ENCODE measurements at regions of chr14 and their contacts with region 1.

Region 1: DNA sequence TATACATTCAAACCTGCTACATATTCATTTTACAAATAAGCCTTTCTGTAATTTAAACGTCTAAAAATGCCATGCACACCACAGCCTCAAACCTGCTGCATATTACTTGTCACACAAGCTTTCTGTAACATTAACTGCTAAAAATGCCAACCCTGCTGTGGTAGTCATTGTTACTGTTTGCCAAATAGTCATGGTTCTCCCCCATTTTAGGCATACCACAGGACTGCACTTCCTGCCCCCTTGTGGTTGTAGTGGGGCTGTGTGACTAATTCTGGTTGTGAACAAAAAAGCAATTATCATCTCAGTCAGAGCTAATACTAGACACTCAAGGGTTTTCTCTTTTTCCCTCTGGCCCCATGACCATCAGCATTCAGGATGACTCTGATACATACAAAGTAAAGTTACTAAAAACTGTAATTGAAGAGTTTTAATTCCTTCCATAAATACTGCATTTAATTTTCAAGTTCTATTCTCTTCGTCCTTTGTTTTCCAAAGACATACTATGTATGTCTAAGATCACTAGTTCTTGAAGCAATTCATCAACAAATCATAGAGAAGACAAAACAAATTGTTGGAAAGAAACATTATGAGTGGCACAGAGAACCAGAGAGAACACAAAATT is 5.7 kb upstream of the SLC35F4 start:
- DNase-seq: peak; percentile 34 to 58
- H3K4me3 ChIP-seq: no peak overlapping the region
- H3K27ac ChIP-seq: no peak overlapping the region
- H3K4me1 ChIP-seq: peaks cover 29 to 30% of the 10 kb centered on the region in 2 donors
- H3K27me3 ChIP-seq: no peaks in the 10 kb centered on the region
- CTCF ChIP-seq: peak in 4 of 6 experiments; percentile 35 to 68 (median 62)
- POLR2A ChIP-seq: no peak

Region 2: DNA sequence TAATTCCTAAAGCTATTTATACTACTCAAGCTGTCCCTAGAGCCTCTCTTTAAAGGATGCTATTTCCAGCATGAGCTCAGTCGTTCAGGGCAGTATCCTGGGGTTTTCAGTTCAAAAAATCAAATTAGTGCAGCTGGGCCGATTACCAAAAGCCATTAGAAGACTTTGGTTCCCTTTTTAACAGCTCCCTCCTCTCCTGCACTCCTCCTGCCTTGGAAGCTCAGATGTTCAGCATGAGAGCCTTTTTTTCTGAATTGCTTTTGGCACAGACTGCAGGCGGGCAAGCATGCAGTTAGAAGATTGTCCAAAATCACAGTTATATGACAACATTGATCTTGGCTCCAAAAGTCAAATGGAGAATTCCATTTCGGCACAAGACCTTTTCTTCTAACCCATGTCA is 185.3 kb before region 1 on chr14:
- intact Hi-C with region 1: loop called (anchors 10 kb)
- DNase-seq: peak; percentile 74 to 76
- H3K4me3 ChIP-seq: no peak overlapping the region
- H3K27ac ChIP-seq: peak overlapping the region in 1 of 3 donors; percentile 13
- H3K4me1 ChIP-seq: peaks cover 3 to 14% of the 10 kb centered on the region in 2 donors
- H3K27me3 ChIP-seq: no peaks in the 10 kb centered on the region
- CTCF ChIP-seq: no peak
- POLR2A ChIP-seq: no peak